A549 (cell line): ENCODE measurements at regions of chr12 and their contacts with region 1.

Region 1: GRCh38 chr12:104294845-104295688 is 8.5 kb upstream of the EID3 start:
- DNase-seq: peak in 1 of 2 experiments; percentile 53
- ATAC-seq: peak; percentile 8 to 23
- H3K4me3 ChIP-seq: peak overlapping the region; percentile 68
- H3K27ac ChIP-seq: peak overlapping the region; percentile 94 to 98
- H3K4me1 ChIP-seq: peaks cover 75% of the 10 kb centered on the region
- CTCF ChIP-seq: no peak
- EP300 ChIP-seq: no peak
- POLR2A ChIP-seq: no peak
- RAD21 ChIP-seq: no peak

Region 2: DNA sequence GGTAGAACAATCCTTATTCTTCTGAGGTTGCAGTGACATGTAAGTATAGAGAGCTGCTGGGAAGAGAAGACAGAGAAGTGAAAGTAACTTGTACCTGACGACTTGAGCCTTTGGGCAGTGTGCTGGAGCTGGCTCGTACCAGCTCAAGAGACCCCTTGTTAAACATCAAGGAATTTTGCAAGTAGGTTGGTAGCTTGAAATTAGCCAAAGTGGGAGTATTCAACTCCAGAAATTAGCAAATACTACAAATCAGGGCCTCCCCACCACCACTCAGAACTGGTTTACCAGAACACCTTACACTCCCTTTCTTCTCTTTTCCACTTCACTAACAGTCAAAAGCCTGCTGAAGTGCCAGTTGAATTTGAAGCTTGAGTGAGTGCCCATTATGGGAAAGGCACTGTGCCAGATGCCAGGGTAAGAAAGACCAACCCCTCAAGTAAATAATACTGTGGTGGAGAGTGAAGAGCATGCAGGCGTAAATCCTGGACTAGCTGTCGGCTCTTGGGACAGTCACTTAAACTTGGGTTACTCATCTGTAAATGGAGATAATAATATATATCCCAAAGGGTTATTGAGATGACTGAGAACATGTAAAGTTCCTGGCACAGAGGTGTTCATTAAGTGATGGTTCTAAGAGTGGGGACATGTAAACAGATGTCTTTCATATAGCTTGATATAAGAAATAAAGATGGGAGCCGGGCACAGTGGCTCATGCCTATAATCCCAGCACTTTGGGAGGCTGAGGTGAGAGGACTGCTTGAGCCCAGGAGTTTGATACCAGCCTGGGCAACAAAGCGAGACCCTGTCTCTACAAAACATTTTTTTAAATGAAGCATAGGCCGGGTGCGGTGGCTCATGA is 18.6 kb before region 1 on chr12:
- CTCF ChIA-PET with region 1: interaction called, 10 read pairs
- POLR2A ChIA-PET with region 1: interaction called, 68 read pairs
- DNase-seq: peak in 1 of 2 experiments; percentile 64
- ATAC-seq: peak; percentile 25 to 32; a peak in 4 of 6 replicates
- H3K4me3 ChIP-seq: peak overlapping the region; percentile 25
- H3K27ac ChIP-seq: peak overlapping the region; percentile 85 to 98
- H3K4me1 ChIP-seq: peaks cover 72% of the 10 kb centered on the region
- CTCF ChIP-seq: no peak
- EP300 ChIP-seq: no peak
- POLR2A ChIP-seq: no peak
- RAD21 ChIP-seq: no peak